ENCODE measurements at regions of chr14 and their contacts with region 1.

Region 1: GRCh38 chr14:50231475-50232275 is at the start of gene SOS2:
- DNase-seq: peak; percentile 90 to 91
- H3K4me3 ChIP-seq: peak within 1 kb of the TSS; percentile 57 to 87 (median 65)
- H3K27ac ChIP-seq: peak within 1 kb of the TSS; percentile 78 to 99 (median 94)
- H3K4me1 ChIP-seq: peaks cover 30 to 31% of the 10 kb centered on the region in 2 donors
- H3K27me3 ChIP-seq: no peaks in the 10 kb centered on the region
- CTCF ChIP-seq: peak in 1 of 6 experiments; percentile 8
- POLR2A ChIP-seq: peak; percentile 58 to 94
- total RNA-seq, gene SOS2: 43.4 to 69.9 (median 57.9) TPM

Region 2: GRCh38 chr14:50260511-50260910 is 28.8 kb after region 1 on chr14:
- intact Hi-C with region 1: no loop called
- DNase-seq: no peak
- H3K4me3 ChIP-seq: no peak overlapping the region
- H3K27ac ChIP-seq: no peak overlapping the region
- H3K4me1 ChIP-seq: no peaks in the 10 kb centered on the region
- H3K27me3 ChIP-seq: no peaks in the 10 kb centered on the region
- CTCF ChIP-seq: peak in 3 of 6 experiments; percentile 33 to 42 (median 36)
- POLR2A ChIP-seq: no peak

Region 3: GRCh38 chr14:50303744-50304471 is 72.2 kb after region 1 on chr14:
- intact Hi-C with region 1: loop called (anchors 10 kb)
- DNase-seq: peak; percentile 72 to 75
- H3K4me3 ChIP-seq: no peak overlapping the region
- H3K27ac ChIP-seq: no peak overlapping the region
- H3K4me1 ChIP-seq: peaks cover 5 to 9% of the 10 kb centered on the region in 2 donors
- H3K27me3 ChIP-seq: no peaks in the 10 kb centered on the region
- CTCF ChIP-seq: no peak
- POLR2A ChIP-seq: no peak